AG04449 (cell line): ENCODE measurements at regions of chr14 and their contacts with region 1.

Region 1: DNA sequence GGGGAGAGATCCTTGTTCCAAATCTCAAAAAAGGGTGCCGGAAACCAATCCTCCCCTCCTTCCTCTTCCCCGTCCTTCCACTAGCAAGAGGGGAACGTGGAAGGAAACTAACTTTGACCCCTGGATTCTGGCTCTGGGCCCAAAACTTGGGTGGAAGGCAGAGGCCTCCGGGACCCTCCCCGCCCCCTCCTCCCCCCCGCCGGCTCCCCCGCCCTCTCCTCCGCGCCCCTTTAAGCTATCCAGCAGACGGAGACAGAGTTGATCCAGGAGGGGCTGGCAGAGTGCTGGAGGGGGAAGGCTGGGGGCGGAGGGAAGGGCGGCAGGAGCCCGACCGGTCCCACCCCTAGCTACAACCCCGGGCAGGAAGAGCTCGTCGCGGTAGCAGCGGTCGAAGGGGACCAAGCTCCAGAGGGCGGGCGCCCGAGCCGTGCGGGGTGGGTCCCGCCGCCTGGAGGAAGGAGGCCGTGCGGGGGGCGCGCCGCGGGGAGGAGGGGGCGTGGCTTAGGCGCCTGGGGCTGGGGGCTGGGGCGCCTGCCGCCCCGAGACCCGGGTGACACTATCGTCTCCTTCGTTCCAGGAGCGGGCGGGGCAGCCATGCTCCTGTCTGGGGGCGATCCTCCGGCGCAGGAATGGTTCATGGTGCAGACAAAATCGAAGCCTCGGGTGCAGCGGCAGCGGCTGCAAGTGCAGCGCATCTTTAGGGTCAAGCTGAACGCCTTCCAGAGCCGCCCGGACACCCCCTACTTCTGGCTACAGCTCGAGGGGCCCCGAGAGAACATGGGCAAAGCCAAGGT is at the start of gene NYNRIN:
- DNase-seq: no peak
- H3K4me3 ChIP-seq: peak within 1 kb of the TSS; percentile 69
- CTCF ChIP-seq: no peak

Region 2: GRCh38 chr14:24071144-24071697 is 327.6 kb before region 1 on chr14 and contains the start of gene CPNE6:
- CTCF ChIA-PET with region 1: no interaction called
- POLR2A ChIA-PET with region 1: no interaction called
- DNase-seq: no peak
- H3K4me3 ChIP-seq: no peak within 1 kb of the TSS
- CTCF ChIP-seq: no peak

Region 3: DNA sequence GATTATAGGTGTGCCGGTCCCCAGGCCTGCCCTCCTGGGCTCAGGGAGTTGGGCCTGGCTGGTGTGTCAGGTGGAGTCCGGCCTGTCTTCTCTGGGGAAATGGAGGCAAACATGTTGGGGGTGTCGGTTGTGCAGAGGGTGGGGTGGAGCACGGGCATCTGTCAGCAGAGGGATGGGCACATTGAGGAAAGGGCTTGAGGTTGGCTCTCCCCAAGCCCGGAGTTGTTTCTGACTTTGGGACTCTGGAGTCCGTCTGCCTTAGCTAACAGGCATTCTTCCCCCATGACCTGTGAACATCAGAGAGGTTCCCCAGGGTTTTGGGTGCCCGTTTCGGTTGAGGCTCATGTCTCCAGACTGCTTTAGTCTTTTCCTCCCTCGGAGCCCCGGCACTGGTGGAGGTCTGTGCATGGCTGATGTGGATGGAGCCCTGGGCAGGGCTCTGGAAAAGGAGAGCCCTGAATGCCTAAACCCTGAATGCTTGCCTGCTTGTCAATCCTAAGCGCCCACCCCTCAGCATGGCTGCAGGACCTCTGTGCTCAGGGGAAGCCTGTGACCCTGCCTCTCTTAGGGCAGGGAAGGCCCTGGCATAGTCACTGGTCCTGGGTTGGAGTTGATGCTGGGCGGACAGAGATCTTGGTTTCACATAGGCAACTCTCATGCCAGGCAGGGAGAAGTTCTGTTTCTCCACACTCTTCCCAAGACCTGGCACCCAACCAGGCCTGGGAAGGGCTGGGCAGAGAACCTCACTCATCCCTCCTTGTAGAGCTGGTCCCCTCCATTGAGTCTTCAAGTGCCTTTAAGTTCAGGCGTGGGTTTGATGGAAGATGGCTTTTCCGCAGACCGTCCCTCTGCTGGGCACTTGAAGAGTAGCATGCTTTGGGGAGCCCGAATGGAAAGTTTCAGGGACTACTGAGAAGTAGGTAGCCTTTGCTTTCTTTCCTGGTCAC is 12.9 kb after region 1 on chr14:
- CTCF ChIA-PET with region 1: interaction called, 557 read pairs
- POLR2A ChIA-PET with region 1: no interaction called
- DNase-seq: no peak
- H3K4me3 ChIP-seq: no peak overlapping the region
- CTCF ChIP-seq: peak; percentile 76